MCF 10A (cell line): ENCODE measurements at regions of chr12 and their contacts with region 1.

Region 1: GRCh38 chr12:62435303-62436163 is 31.1 kb upstream of the MON2 start:
- DNase-seq: peak; percentile 32
- H3K4me3 Mint-ChIP-seq: peak overlapping the region; percentile 71
- H3K27ac Mint-ChIP-seq: no peak overlapping the region
- H3K4me1 Mint-ChIP-seq: peaks cover 20% of the 10 kb centered on the region
- H3K27me3 Mint-ChIP-seq: peaks cover 21% of the 10 kb centered on the region
- CTCF ChIP-seq: no peak

Region 2: GRCh38 chr12:62247281-62248045 is 188.1 kb before region 1 on chr12:
- CTCF ChIA-PET with region 1: no interaction called
- POLR2A ChIA-PET with region 1: no interaction called
- intact Hi-C with region 1: no loop called
- DNase-seq: no peak
- H3K4me3 Mint-ChIP-seq: no peak overlapping the region
- H3K27ac Mint-ChIP-seq: no peak overlapping the region
- H3K4me1 Mint-ChIP-seq: peaks cover 34% of the 10 kb centered on the region
- H3K27me3 Mint-ChIP-seq: no peaks in the 10 kb centered on the region
- CTCF ChIP-seq: no peak

Region 3: DNA sequence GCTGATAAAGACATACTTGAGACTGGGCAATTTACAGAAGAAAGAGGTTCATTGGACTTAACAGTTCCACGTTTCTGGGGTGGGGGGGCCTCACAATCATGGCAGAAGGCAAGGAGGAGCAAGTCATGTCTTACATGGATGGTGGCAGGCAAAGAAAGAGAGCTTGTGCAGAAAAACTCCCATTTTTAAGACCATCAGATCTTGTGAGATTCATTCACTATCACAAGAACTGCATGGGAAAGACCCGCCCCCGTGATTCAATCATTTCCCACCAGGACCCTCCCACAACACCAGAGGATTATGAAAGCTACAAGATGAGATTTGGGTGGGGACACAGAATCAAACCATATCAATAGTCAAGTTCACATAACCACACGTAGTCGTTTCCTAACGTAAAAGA is 89.9 kb before region 1 on chr12:
- CTCF ChIA-PET with region 1: no interaction called
- POLR2A ChIA-PET with region 1: no interaction called
- intact Hi-C with region 1: no loop called
- DNase-seq: no peak
- H3K4me3 Mint-ChIP-seq: no peak overlapping the region
- H3K27ac Mint-ChIP-seq: no peak overlapping the region
- H3K4me1 Mint-ChIP-seq: no peaks in the 10 kb centered on the region
- H3K27me3 Mint-ChIP-seq: no peaks in the 10 kb centered on the region
- CTCF ChIP-seq: no peak

Region 4: DNA sequence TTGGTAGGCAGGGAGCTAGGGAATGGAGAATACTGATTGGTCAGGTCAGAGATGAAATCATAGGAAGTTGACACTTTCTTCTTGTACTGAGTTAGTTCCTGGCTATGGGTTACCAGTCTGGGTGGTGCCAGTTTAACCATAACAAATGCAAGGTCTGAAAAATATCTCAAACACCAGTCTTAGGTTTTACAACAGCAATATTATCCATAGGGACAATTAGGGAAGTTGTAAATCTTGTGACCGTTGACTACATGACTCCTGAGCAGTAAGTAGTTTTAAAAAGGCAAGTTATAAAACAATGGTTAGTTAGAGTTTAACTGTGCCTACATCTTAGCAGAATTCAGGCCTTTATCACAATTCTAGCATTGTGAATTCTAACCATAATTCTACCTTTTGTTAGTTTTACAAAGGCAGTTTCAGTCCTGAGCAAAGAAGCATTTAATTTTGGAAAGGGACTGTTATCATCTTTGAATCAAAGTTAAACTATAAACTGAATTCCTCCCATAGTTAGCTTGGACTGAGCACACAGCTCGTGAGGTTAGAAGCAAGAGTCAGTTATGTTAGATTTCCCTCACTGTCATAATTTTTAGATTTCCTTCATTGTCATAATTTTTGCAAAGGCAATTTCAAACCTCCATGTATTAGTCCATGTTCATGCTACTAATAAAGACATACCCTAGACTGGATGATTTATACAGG is 11.4 kb after region 1 on chr12:
- CTCF ChIA-PET with region 1: interaction called, 16 read pairs
- POLR2A ChIA-PET with region 1: no interaction called
- intact Hi-C with region 1: no loop called
- DNase-seq: no peak
- H3K4me3 Mint-ChIP-seq: no peak overlapping the region
- H3K27ac Mint-ChIP-seq: no peak overlapping the region
- H3K4me1 Mint-ChIP-seq: no peaks in the 10 kb centered on the region
- H3K27me3 Mint-ChIP-seq: peaks cover 12% of the 10 kb centered on the region
- CTCF ChIP-seq: no peak

Region 5: DNA sequence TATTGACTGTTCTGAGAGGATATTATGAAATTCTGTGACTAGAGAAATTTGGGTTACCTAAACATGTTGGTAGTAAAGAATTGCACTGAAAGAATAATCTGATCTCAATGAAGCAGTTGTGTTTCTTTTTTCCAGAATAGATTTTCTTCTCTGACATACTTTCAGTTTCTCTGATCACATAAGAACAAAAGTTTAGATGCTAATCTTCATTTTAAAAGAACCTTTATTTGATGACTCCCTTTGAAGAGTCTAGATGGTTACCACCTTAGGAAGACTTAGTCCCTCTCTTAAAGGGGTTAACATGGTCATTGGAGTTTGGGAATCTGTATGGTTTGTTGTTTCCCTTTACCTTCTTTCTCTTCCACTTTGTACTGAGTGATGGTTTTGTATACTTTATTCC is 89.7 kb after region 1 on chr12:
- CTCF ChIA-PET with region 1: interaction called, 13 read pairs
- POLR2A ChIA-PET with region 1: no interaction called
- intact Hi-C with region 1: no loop called
- DNase-seq: no peak
- H3K4me3 Mint-ChIP-seq: no peak overlapping the region
- H3K27ac Mint-ChIP-seq: no peak overlapping the region
- H3K4me1 Mint-ChIP-seq: no peaks in the 10 kb centered on the region
- H3K27me3 Mint-ChIP-seq: no peaks in the 10 kb centered on the region
- CTCF ChIP-seq: no peak

Region 6: GRCh38 chr12:62581288-62582064 is 145.9 kb after region 1 on chr12:
- CTCF ChIA-PET with region 1: interaction called, 11 read pairs
- POLR2A ChIA-PET with region 1: no interaction called
- intact Hi-C with region 1: loop called (anchors 2 kb)
- DNase-seq: peak; percentile 53
- H3K4me3 Mint-ChIP-seq: no peak overlapping the region
- H3K27ac Mint-ChIP-seq: no peak overlapping the region
- H3K4me1 Mint-ChIP-seq: no peaks in the 10 kb centered on the region
- H3K27me3 Mint-ChIP-seq: no peaks in the 10 kb centered on the region
- CTCF ChIP-seq: peak; percentile 49

Region 7: DNA sequence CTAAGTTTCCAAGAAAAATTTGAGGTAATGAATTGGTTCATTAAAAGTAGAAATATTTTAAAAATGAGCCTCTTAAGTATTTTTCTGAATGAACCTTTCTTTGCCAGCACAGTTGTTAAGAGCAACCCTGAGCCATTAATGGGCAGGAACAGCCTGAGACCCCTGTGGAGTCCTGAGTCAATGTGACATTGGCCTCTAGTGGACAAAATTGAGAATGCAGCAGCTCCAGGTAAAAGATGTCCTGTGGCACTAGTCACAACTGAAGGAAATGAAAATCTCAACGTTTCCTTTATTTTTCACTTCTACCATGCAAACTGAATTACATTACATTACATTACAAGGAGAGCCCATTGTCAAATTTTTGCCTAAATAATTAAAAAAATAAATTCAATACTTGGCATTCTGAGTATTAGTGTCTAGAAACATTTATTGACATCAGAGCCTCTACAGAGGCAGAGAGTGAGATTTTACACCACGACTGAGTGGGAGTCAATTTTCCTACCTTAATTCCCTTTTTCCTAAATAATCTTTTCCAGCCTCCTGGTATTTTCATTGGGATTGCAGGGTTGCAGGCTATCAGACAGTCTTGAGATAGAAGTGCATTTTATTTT is 363.7 kb after region 1 on chr12:
- CTCF ChIA-PET with region 1: interaction called, 96 read pairs
- POLR2A ChIA-PET with region 1: interaction called, 4 read pairs
- intact Hi-C with region 1: loop called (anchors 1 kb)
- DNase-seq: peak; percentile 74
- H3K4me3 Mint-ChIP-seq: no peak overlapping the region
- H3K27ac Mint-ChIP-seq: no peak overlapping the region
- H3K4me1 Mint-ChIP-seq: no peaks in the 10 kb centered on the region
- H3K27me3 Mint-ChIP-seq: no peaks in the 10 kb centered on the region
- CTCF ChIP-seq: peak; percentile 86

Region 8: GRCh38 chr12:62873116-62873742 is 437.7 kb after region 1 on chr12:
- CTCF ChIA-PET with region 1: no interaction called
- POLR2A ChIA-PET with region 1: no interaction called
- intact Hi-C with region 1: no loop called
- DNase-seq: no peak
- H3K4me3 Mint-ChIP-seq: no peak overlapping the region
- H3K27ac Mint-ChIP-seq: no peak overlapping the region
- H3K4me1 Mint-ChIP-seq: no peaks in the 10 kb centered on the region
- H3K27me3 Mint-ChIP-seq: no peaks in the 10 kb centered on the region
- CTCF ChIP-seq: no peak

Region 9: DNA sequence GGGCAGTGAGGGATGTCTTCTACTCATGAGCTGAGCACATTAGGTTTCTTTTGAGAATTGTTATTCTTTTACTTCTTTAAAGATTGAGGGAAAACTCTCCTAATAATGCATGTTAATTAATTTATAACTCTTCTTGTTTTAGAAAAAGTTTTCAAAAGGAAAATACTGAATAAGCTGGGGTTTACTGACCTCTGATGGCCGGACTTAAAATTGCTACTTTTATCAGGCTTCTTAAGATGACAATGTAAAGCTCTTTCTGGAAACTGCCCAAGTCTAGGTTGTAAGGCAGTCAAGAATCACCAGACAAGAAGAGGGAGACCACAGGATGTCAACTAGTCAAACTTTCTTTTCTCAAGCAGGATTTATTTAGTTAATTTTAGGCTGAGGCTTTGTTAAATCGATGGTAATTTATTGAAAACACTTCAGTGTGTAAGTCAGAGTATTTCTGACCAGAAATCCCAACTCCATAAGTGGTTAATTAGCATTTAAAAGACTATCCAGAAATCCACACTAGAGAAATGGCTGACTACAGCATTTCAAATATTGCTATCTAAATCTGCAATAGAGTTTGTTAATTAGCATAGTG is 633.4 kb after region 1 on chr12:
- CTCF ChIA-PET with region 1: interaction called, 5 read pairs
- POLR2A ChIA-PET with region 1: no interaction called
- intact Hi-C with region 1: loop called (anchors 2 kb)
- DNase-seq: peak; percentile 72
- H3K4me3 Mint-ChIP-seq: no peak overlapping the region
- H3K27ac Mint-ChIP-seq: no peak overlapping the region
- H3K4me1 Mint-ChIP-seq: no peaks in the 10 kb centered on the region
- H3K27me3 Mint-ChIP-seq: no peaks in the 10 kb centered on the region
- CTCF ChIP-seq: peak; percentile 55